Posterior cingulate gyrus (tissue), 11 donors: ENCODE measurements at regions of chr16 and their contacts with region 1.

Region 1: GRCh38 chr16:46555951-46556350 is 65.2 kb downstream of the SHCBP1 start:
- DNase-seq: no peak

Region 2: DNA sequence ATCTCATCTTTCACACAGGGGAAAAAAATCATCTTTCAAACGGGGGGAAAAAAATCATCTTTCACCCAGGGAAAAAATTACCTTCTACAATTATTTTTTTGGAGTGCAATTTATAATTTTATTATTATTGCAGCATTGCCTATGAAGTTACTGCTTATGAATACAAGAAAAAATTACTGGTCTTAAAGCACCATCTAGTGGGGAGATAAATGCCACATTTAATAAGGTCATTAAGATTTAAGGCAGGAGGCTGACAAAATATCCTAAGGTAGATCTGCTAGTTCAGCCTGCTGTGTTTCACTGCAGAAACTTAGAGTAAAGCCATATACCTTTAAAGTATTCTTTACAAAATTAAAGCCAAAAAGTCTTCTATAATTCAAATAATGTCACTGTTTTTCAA is 51.6 kb after region 1 on chr16:
- intact Hi-C with region 1: loop called (anchors 1 kb)
- DNase-seq: no peak

Region 3: GRCh38 chr16:46649928-46650623 is 94.1 kb after region 1 on chr16:
- intact Hi-C with region 1: no loop called
- DNase-seq: no peak